GM12878 (cell line): ENCODE measurements at regions of chr9 and their contacts with region 1.

Region 1: GRCh38 chr9:127916665-127917613 is at the start of gene ST6GALNAC4:
- DNase-seq: no peak
- ATAC-seq: peak; percentile 85
- H3K4me3 ChIP-seq: peak within 1 kb of the TSS; percentile 95
- H3K27ac ChIP-seq: peak within 1 kb of the TSS; percentile 98
- H3K4me1 ChIP-seq: peaks cover 38% of the 10 kb centered on the region
- H3K27me3 ChIP-seq: no peaks in the 10 kb centered on the region
- CTCF ChIP-seq: no peak
- EP300 ChIP-seq: no peak
- POLR2A ChIP-seq: peak; percentile 86
- RAD21 ChIP-seq: no peak
- polyA plus RNA-seq, gene ST6GALNAC4: 4.2 to 6.6 TPM

Region 2: GRCh38 chr9:127715394-127716337 is 201.3 kb before region 1 on chr9 and contains the starts of genes PTRH1 and TTC16:
- CTCF ChIA-PET with region 1: no interaction called
- POLR2A ChIA-PET with region 1: no interaction called
- RAD21 ChIA-PET with region 1: no interaction called
- SMC1A ChIA-PET with region 1: interaction called, 6 read pairs
- in situ Hi-C with region 1: no loop called
- intact Hi-C with region 1: loop called (anchors 5 kb)
- DNase-seq: peak; percentile 72
- ATAC-seq: peak; percentile 98
- H3K4me3 ChIP-seq: peak within 1 kb of the TSS; percentile 74
- H3K27ac ChIP-seq: no peak within 1 kb of the TSS; the same call in 1 of the 2 replicates
- H3K4me1 ChIP-seq: peaks cover 6% of the 10 kb centered on the region; the same call in 1 of the 2 replicates
- H3K27me3 ChIP-seq: no peaks in the 10 kb centered on the region
- CTCF ChIP-seq: no peak
- EP300 ChIP-seq: no peak
- POLR2A ChIP-seq: peak; percentile 65
- RAD21 ChIP-seq: no peak
- polyA plus RNA-seq, gene PTRH1: 0.69 to 1.8 TPM
- polyA plus RNA-seq, gene TTC16: not detected

Region 3: DNA sequence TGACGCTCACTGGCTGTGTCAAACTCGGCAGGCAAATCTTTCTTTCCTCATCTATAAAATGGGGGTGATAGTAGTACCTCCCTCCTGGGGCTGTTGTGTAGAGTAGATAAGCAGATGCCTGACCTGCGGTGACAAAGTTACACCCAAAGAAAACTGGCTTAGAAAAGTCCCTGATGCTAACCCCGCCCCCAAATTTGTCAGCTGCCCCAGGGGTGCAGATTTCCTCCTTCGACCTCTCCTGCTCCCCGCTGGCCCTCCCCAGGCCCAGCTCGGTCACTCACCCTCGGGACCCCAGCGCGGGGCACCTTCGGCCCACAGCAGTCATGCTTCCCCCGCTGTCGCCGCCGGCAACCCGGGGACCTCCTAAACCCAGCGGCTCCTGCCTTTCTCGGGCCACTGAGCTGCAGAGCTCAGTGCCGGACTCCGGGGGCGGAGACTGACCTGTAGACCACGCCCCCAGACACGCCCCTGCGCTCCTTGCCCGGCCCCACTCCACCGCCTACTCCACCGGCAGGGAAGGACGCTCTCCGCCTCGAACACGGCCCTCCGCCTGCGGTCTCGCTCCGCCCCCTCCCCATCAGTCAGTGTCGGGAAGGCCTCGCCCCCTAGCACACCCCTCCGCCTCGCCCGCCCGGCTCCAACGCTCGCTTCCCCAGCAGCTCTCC is 145.9 kb before region 1 on chr9:
- CTCF ChIA-PET with region 1: interaction called, 15 read pairs
- POLR2A ChIA-PET with region 1: interaction called, 6 read pairs
- RAD21 ChIA-PET with region 1: interaction called, 17 read pairs
- SMC1A ChIA-PET with region 1: interaction called, 5 read pairs
- in situ Hi-C with region 1: no loop called
- intact Hi-C with region 1: no loop called
- DNase-seq: peak; percentile 90
- ATAC-seq: peak; percentile 95
- H3K4me3 ChIP-seq: peak overlapping the region; percentile 79
- H3K27ac ChIP-seq: peak overlapping the region; percentile 23; the same call in 1 of the 2 replicates
- H3K4me1 ChIP-seq: peaks cover 24% of the 10 kb centered on the region
- H3K27me3 ChIP-seq: no peaks in the 10 kb centered on the region
- CTCF ChIP-seq: no peak
- EP300 ChIP-seq: no peak
- POLR2A ChIP-seq: peak; percentile 78
- RAD21 ChIP-seq: no peak

Region 4: DNA sequence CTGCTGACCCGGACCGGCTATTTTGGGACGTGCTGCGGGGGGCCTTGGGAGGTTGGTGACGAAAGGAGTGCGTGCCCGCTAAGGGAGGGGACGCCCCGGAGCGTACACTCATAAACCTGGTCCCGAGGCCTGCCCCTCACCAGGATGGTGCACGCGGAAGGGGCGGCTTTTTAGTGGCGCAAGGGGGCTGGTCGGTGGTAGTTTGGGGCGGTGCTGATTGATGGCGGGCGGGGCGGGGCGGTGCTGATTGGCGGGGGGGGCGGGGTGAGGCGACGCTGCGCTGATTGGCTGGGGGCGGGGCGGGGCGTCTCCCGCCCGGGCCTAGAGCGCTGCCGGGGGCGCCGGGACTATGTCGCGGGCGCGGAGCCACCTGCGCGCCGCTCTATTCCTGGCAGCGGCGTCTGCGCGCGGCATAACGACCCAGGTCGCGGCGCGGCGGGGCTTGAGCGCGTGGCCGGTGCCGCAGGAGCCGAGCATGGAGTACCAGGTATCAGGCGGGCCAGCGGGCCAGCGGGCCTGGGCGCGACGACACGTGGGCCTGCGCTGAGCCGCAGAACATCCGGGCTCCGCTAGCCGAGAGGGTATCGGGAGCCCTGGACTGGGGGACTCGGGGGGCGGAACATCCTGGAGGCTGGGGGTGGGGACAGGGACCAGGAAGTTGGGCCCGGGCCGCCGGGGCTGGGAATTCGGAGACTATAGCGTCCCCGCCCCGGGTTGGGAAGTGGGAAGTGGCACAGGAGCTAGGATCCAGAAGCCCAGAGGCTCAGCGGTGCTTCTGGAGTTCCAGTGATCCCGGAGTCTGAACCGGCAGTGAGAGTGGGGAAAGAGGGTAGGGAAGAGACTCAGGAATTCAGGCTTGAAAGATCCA is 114.1 kb before region 1 on chr9 and contains the start of gene FPGS:
- CTCF ChIA-PET with region 1: interaction called, 3 read pairs
- POLR2A ChIA-PET with region 1: interaction called, 5 read pairs
- RAD21 ChIA-PET with region 1: interaction called, 4 read pairs
- SMC1A ChIA-PET with region 1: interaction called, 4 read pairs
- in situ Hi-C with region 1: no loop called
- intact Hi-C with region 1: loop called (anchors 5 kb)
- DNase-seq: peak; percentile 49
- ATAC-seq: peak; percentile 91
- H3K4me3 ChIP-seq: peak within 1 kb of the TSS; percentile 85
- H3K27ac ChIP-seq: peak within 1 kb of the TSS; percentile 97
- H3K4me1 ChIP-seq: peaks cover 16% of the 10 kb centered on the region
- H3K27me3 ChIP-seq: no peaks in the 10 kb centered on the region
- CTCF ChIP-seq: no peak
- EP300 ChIP-seq: no peak
- POLR2A ChIP-seq: peak; percentile 93
- RAD21 ChIP-seq: no peak
- polyA plus RNA-seq, gene FPGS: 1.2 to 8.2 TPM

Region 5: GRCh38 chr9:127884427-127884911 is 32.5 kb before region 1 on chr9:
- CTCF ChIA-PET with region 1: interaction called, 16 read pairs
- POLR2A ChIA-PET with region 1: interaction called, 3 read pairs
- RAD21 ChIA-PET with region 1: interaction called, 9 read pairs
- SMC1A ChIA-PET with region 1: interaction called, 10 read pairs
- in situ Hi-C with region 1: no loop called
- intact Hi-C with region 1: loop called (anchors 5 kb)
- DNase-seq: no peak
- ATAC-seq: no peak; the same call in 2 of the 3 replicates
- H3K4me3 ChIP-seq: no peak overlapping the region
- H3K27ac ChIP-seq: no peak overlapping the region
- H3K4me1 ChIP-seq: no peaks in the 10 kb centered on the region; the same call in 1 of the 2 replicates
- H3K27me3 ChIP-seq: no peaks in the 10 kb centered on the region
- CTCF ChIP-seq: no peak
- EP300 ChIP-seq: no peak
- POLR2A ChIP-seq: peak; percentile 15; the same call in 1 of the 2 replicates
- RAD21 ChIP-seq: no peak

Region 6: DNA sequence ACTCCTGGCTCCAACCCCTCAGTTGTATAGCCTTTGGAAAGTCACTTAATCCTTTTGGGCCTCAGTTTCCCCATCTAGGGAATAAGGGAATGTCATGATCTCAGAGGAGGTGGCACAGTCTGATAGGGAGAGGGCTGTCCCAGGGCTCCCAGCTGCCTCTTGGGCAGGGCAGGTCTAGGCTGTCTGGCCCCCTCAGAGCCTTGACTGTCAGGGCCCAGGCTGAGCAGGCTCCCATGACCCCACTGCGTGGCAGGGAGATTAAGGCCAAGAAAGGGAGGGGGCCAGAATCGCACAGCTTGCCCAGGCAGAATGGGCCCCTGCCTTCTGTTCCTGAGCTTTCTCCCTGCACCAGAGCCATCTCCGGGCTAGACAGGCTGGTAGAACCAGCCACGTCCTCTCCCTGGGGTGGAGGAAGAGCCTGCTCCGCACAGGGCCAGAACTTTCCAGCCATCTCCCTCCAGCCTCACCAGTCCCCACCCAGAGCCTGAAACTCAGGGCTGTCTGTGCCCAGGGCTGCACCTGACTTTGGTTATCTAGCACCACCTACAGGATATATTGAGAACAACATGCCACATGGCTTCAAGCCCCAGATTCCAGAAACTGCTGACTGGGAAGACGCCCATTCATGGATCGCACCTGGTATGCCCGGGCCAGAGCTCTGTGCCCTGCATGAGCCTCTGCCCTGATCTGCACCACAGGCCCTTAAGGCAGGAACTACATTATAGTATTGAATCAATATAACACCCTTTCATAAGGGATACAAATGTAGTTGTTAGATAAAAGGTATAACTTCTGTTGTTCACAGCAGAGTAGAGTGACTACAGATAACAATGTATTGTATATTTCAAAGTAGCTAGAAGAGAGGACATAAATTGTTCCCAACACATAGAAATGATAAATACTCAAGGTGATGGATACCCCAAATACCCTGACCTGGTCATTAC is 118.2 kb after region 1 on chr9:
- CTCF ChIA-PET with region 1: interaction called, 14 read pairs
- POLR2A ChIA-PET with region 1: no interaction called
- RAD21 ChIA-PET with region 1: interaction called, 3 read pairs
- SMC1A ChIA-PET with region 1: interaction called, 7 read pairs
- in situ Hi-C with region 1: no loop called
- intact Hi-C with region 1: no loop called
- DNase-seq: peak; percentile 60
- ATAC-seq: peak; percentile 82
- H3K4me3 ChIP-seq: no peak overlapping the region
- H3K27ac ChIP-seq: no peak overlapping the region
- H3K4me1 ChIP-seq: peaks cover 42% of the 10 kb centered on the region
- H3K27me3 ChIP-seq: no peaks in the 10 kb centered on the region
- CTCF ChIP-seq: peak; percentile 82 to 91 (median 91); a peak in 5 of 6 replicates
- EP300 ChIP-seq: no peak
- POLR2A ChIP-seq: no peak
- RAD21 ChIP-seq: peak; percentile 98